Activated CD4-positive, alpha-beta memory T cell treated with anti-CD3 and anti-CD28 coated beads for 36 hours (primary cell): ENCODE measurements at regions of chr9 and their contacts with region 1.

Region 1: GRCh38 chr9:78035383-78035993 is 3.9 kb upstream of the GNAQ start:
- DNase-seq: peak; percentile 64
- H3K4me3 Mint-ChIP-seq: no peak overlapping the region
- H3K27ac Mint-ChIP-seq: no peak overlapping the region
- H3K4me1 Mint-ChIP-seq: peaks cover 31% of the 10 kb centered on the region
- H3K27me3 Mint-ChIP-seq: no peaks in the 10 kb centered on the region

Region 2: GRCh38 chr9:77456829-77457437 is 578.6 kb before region 1 on chr9:
- CTCF ChIA-PET with region 1: interaction called, 15 read pairs
- POLR2A ChIA-PET with region 1: no interaction called
- intact Hi-C with region 1: loop called (anchors 5 kb)
- DNase-seq: peak; percentile 91
- H3K4me3 Mint-ChIP-seq: no peak overlapping the region
- H3K27ac Mint-ChIP-seq: no peak overlapping the region
- H3K4me1 Mint-ChIP-seq: peaks cover 13% of the 10 kb centered on the region
- H3K27me3 Mint-ChIP-seq: no peaks in the 10 kb centered on the region

Region 3: DNA sequence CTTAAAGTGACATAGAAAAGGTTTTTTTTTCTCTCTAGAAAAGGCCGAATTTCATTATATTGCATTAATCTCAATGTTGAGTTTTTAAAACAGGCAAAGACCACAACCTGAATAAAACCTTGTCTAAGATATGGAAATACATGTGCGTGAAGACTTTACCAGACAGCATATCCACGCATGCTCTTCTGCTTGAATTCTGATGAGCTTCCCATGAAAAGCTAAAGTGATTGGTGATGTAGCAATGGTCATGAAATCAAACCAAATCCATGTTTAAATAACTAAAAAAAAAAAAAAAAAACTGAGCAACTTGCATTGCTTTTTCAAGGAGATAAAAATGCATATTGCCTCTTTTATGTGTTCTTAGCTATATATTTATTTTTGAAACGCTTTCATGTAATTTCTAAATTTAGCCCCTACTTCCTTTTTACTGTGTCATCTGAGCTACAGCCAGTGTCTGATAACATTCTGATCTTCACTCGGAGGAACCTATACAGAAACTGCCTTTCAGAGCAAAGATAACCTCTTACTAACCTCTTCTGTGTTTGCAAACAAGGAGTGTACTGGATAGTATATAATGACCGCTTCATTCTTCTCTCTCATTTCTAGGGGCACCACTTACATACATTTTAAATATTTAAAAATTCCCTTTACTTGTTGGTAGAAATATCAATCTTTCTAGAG is 208.2 kb before region 1 on chr9:
- CTCF ChIA-PET with region 1: interaction called, 7 read pairs
- POLR2A ChIA-PET with region 1: no interaction called
- intact Hi-C with region 1: loop called (anchors 5 kb)
- DNase-seq: no peak
- H3K4me3 Mint-ChIP-seq: no peak overlapping the region
- H3K27ac Mint-ChIP-seq: peak overlapping the region; percentile 24
- H3K4me1 Mint-ChIP-seq: peaks cover 35% of the 10 kb centered on the region
- H3K27me3 Mint-ChIP-seq: no peaks in the 10 kb centered on the region

Region 4: DNA sequence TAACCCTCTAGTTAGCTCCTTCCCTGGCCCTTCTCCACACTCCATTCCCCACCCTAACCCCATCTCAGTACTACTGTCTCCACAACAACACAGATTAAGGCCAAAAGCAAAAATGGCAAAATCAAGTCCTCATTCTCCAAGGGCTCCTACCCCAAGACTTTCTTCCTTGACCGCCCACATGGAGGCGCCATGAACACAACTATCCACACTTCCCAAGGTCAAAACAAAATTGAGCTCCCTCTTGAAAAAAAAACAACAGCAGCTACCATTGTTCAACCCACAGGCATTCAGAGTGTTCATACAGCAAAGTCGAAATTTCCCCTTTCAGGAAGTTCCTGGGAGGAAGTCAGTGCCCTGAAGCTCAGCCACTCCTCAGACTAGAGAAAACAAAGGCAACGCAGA is 58.3 kb before region 1 on chr9:
- CTCF ChIA-PET with region 1: interaction called, 78 read pairs
- POLR2A ChIA-PET with region 1: interaction called, 7 read pairs
- intact Hi-C with region 1: loop called (anchors 1 kb)
- DNase-seq: peak; percentile 72
- H3K4me3 Mint-ChIP-seq: no peak overlapping the region
- H3K27ac Mint-ChIP-seq: peak overlapping the region; percentile 31
- H3K4me1 Mint-ChIP-seq: peaks cover 51% of the 10 kb centered on the region
- H3K27me3 Mint-ChIP-seq: no peaks in the 10 kb centered on the region

Region 5: GRCh38 chr9:78053627-78054026 is 18.1 kb after region 1 on chr9:
- CTCF ChIA-PET with region 1: interaction called, 26 read pairs
- POLR2A ChIA-PET with region 1: interaction called, 3 read pairs
- intact Hi-C with region 1: no loop called
- DNase-seq: peak; percentile 27
- H3K4me3 Mint-ChIP-seq: no peak overlapping the region
- H3K27ac Mint-ChIP-seq: no peak overlapping the region
- H3K4me1 Mint-ChIP-seq: peaks cover 19% of the 10 kb centered on the region
- H3K27me3 Mint-ChIP-seq: no peaks in the 10 kb centered on the region

Region 6: GRCh38 chr9:78121488-78121887 is 86.0 kb after region 1 on chr9:
- CTCF ChIA-PET with region 1: interaction called, 22 read pairs
- POLR2A ChIA-PET with region 1: no interaction called
- intact Hi-C with region 1: loop called (anchors 1 kb)
- DNase-seq: peak; percentile 76
- H3K4me3 Mint-ChIP-seq: no peak overlapping the region
- H3K27ac Mint-ChIP-seq: no peak overlapping the region
- H3K4me1 Mint-ChIP-seq: peaks cover 41% of the 10 kb centered on the region
- H3K27me3 Mint-ChIP-seq: no peaks in the 10 kb centered on the region

Region 7: DNA sequence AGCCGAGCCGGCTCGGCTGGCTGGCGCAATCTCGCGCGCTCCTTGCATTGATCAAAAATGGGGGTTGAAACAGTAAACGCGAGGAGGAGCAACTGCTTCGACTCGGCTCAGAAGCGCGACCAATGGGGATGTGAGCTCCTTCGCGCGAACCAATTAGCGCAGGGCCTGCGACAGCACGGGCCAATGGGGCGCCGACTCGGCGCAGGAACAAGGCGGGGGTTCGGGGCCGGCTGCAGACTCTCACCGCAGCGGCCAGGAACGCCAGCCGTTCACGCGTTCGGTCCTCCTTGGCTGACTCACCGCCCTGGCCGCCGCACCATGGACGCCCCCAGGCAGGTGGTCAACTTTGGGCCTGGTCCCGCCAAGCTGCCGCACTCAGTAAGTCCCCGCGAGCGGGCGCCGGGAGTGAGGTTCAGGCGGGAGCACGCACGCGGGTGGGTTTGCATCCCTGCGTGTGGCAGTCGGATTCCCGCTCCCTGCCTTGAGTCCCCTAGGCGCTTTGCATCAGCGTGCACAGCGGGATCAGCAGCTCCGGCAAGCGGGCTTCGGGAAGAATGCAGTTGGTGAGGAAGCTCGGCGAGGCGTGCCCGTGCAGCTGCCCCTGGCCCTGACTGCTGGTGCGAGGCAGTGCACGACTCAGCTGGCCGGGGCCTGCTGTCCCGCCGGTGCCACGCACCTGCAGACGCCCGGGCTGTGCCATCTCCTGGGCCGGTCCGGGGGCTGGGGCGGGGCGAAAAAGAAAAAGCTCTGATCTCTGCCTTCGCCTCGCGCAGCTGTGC is 261.6 kb after region 1 on chr9 and contains the start of gene PSAT1:
- CTCF ChIA-PET with region 1: interaction called, 8 read pairs
- POLR2A ChIA-PET with region 1: interaction called, 3 read pairs
- intact Hi-C with region 1: loop called (anchors 2 kb)
- DNase-seq: peak; percentile 96
- H3K4me3 Mint-ChIP-seq: peak within 1 kb of the TSS; percentile 89
- H3K27ac Mint-ChIP-seq: peak within 1 kb of the TSS; percentile 87
- H3K4me1 Mint-ChIP-seq: peaks cover 44% of the 10 kb centered on the region
- H3K27me3 Mint-ChIP-seq: no peaks in the 10 kb centered on the region
- total RNA-seq, gene PSAT1: 132 to 137 TPM

Region 8: GRCh38 chr9:78592811-78593210 is 557.3 kb after region 1 on chr9:
- CTCF ChIA-PET with region 1: no interaction called
- POLR2A ChIA-PET with region 1: no interaction called
- intact Hi-C with region 1: no loop called
- DNase-seq: no peak
- H3K4me3 Mint-ChIP-seq: no peak overlapping the region
- H3K27ac Mint-ChIP-seq: no peak overlapping the region
- H3K4me1 Mint-ChIP-seq: no peaks in the 10 kb centered on the region
- H3K27me3 Mint-ChIP-seq: peaks cover 2% of the 10 kb centered on the region